ENCODE measurements at regions of chr2 and their contacts with region 1.

Region 1: GRCh38 chr2:20584637-20585321 is 66.1 kb downstream of the HS1BP3 start:
- DNase-seq: peak; percentile 55
- ATAC-seq: peak; percentile 46

Region 2: DNA sequence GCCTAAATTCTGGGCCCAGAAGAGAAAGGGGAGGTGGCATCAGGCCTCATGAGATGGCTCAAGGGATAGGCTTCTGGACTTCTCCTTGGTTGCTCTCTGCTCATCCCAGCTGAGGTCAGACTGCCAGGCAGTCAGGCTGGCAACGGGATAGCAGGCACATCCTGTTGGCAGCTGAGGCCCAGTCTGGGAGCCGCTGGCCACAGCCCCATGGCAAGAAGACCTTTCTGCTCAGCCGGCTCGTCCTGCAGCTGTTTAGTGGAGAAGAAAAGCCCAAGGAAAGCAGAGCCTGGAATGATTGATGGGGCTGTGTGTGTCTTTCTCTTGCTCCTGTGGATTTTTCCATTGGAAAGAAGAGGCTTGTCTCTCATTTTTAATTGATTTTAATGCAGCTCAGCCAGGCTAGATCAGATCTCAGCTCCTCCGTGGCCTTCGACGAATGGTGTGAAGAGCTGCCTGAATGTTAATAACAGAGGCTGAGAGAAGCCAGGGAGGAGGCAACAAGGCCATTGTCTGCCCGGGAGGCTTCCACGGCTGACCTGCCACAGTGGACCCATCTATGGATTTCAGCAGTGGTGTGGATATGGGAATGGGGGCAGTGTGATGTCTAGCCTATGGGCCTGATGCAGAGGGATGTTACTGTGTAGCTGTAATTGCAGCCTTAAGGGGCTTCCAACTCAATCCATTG is 33.4 kb before region 1 on chr2:
- intact Hi-C with region 1: loop called (anchors 1 kb)
- DNase-seq: no peak
- ATAC-seq: peak; percentile 59

Region 3: GRCh38 chr2:20642055-20642971 is 57.5 kb after region 1 on chr2:
- intact Hi-C with region 1: no loop called
- DNase-seq: peak; percentile 86
- ATAC-seq: peak; percentile 89